Activated CD4-positive, alpha-beta T cell treated with anti-CD3 and anti-CD28 coated beads for 36 hours (primary cell): ENCODE measurements at regions of chr1 and their contacts with region 1.

Region 1: GRCh38 chr1:42380586-42381279 is at the start of gene RIMKLA:
- DNase-seq: peak; percentile 74
- ATAC-seq: peak; percentile 92
- H3K4me3 Mint-ChIP-seq: peak within 1 kb of the TSS; percentile 70
- H3K27ac Mint-ChIP-seq: peak within 1 kb of the TSS; percentile 5
- H3K4me1 Mint-ChIP-seq: peaks cover 3% of the 10 kb centered on the region
- H3K27me3 Mint-ChIP-seq: peaks cover 37% of the 10 kb centered on the region
- total RNA-seq, gene RIMKLA: 6.7 to 8.9 TPM

Region 2: GRCh38 chr1:41360993-41361753 is 1019.6 kb before region 1 on chr1 and contains the start of gene FOXO6:
- CTCF ChIA-PET with region 1: no interaction called
- POLR2A ChIA-PET with region 1: no interaction called
- intact Hi-C with region 1: loop called in 1 of 2 experiments (anchors 5 kb)
- DNase-seq: peak; percentile 96
- ATAC-seq: peak; percentile 96
- H3K4me3 Mint-ChIP-seq: peak within 1 kb of the TSS; percentile 49
- H3K27ac Mint-ChIP-seq: no peak within 1 kb of the TSS
- H3K4me1 Mint-ChIP-seq: peaks cover 10% of the 10 kb centered on the region
- H3K27me3 Mint-ChIP-seq: peaks cover 24% of the 10 kb centered on the region
- total RNA-seq, gene FOXO6: 0.09 TPM in 1 of 2 experiments, not detected in the other

Region 3: DNA sequence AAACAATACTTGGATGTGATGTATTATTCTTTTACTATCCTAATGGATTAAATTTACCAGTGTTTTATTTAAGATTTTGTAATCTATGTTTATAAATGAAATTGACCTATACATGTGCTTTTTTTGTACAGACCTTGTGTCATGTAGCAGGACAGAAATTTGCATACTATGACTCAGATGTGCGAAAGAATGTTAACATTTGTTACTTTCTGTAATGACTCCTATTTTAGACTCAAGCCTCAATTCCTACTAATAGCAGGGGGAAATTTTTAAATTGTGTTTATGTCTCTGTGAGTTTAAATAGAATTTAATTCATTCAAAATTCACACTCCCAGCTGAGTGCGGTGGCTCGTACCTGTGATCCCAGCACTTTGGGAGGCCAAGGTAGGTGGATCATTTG is 21.9 kb before region 1 on chr1:
- CTCF ChIA-PET with region 1: no interaction called
- POLR2A ChIA-PET with region 1: no interaction called
- intact Hi-C with region 1: no loop called
- DNase-seq: no peak
- ATAC-seq: peak; percentile 63
- H3K4me3 Mint-ChIP-seq: no peak overlapping the region
- H3K27ac Mint-ChIP-seq: peak overlapping the region; percentile 47
- H3K4me1 Mint-ChIP-seq: peaks cover 15% of the 10 kb centered on the region
- H3K27me3 Mint-ChIP-seq: peaks cover 2% of the 10 kb centered on the region

Region 4: DNA sequence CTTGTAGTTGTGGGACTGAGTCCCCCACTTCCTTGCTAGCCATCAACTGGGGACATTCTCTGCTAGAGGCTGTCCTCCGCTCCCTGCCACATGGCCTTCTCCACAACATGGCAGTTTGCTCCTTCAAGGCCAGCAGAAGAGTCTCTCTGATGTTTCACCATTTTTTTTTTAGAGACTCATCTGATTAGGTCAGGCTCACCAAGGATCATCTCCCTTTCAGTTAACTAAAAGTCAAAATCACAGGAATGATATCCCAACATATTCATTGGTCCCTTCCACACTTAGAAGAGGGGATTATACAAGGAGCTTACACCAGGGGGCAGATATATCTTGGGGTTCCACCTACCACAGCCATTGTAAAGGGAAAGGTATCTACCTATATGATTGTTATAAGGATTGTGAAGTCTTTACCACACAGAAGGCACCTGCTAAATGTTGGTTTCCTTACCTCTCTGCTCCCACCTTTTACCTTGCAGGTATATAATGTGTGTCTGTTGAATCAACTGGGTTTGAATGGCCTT is 23.2 kb after region 1 on chr1:
- CTCF ChIA-PET with region 1: no interaction called
- POLR2A ChIA-PET with region 1: no interaction called
- intact Hi-C with region 1: no loop called
- DNase-seq: no peak
- ATAC-seq: no peak
- H3K4me3 Mint-ChIP-seq: no peak overlapping the region
- H3K27ac Mint-ChIP-seq: no peak overlapping the region
- H3K4me1 Mint-ChIP-seq: no peaks in the 10 kb centered on the region
- H3K27me3 Mint-ChIP-seq: peaks cover 11% of the 10 kb centered on the region